HEK293 (cell line): ENCODE measurements at regions of chr12 and their contacts with region 1.

Region 1: GRCh38 chr12:118135788-118136558 is at the start of gene PEBP1:
- H3K4me3 ChIP-seq: peak within 1 kb of the TSS; percentile 79
- H3K27ac ChIP-seq: peak within 1 kb of the TSS; percentile 58; the same call in 1 of the 2 replicates
- H3K4me1 ChIP-seq: peaks cover 10% of the 10 kb centered on the region; the same call in 1 of the 2 replicates
- CTCF ChIP-seq: peak; percentile 72

Region 2: GRCh38 chr12:118103604-118104382 is 32.2 kb before region 1 on chr12 and contains the start of gene VSIG10:
- CTCF ChIA-PET with region 1: no interaction called
- POLR2A ChIA-PET with region 1: interaction called, 11 read pairs
- H3K4me3 ChIP-seq: peak within 1 kb of the TSS; percentile 81
- H3K27ac ChIP-seq: peak within 1 kb of the TSS; percentile 85
- H3K4me1 ChIP-seq: peaks cover 5% of the 10 kb centered on the region
- CTCF ChIP-seq: no peak; the same call in none of the 2 replicates

Region 3: DNA sequence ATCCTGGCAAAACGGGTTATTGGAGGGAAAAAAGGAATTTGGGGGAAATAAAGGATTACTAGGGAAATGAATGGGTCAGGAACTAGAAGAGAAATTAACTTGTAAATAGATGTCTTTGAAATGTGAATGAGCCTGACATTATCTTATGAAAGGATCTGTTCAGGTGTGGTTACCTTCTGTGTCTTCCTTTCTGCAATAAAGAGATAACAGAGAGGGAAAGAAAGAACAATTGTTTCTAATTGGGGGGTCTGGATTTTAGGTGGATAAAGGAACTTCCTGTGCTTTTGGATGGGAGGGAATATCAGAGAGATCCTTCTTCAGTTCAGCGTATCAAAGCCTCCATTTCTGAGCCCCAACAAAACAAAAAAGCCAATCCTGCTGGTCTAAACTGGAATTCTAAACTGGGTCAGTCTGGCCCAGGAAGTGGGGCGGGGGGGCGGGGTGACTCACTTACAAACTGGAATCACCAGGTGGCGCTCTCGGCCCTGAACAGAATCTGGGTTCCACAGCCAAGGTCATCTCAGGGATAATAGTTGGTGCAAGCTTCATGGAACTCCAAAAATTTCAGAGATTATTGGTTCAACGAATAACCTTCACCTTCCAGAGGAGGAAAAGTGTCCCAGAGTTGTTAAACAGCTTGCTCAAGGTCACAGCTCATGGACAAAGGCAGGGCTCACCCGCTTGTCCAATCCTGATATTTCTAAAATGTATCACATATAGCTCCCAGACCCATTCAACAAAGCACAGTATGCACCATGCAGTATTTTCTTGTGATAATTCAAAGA is 15.2 kb before region 1 on chr12:
- CTCF ChIA-PET with region 1: interaction called, 8 read pairs
- POLR2A ChIA-PET with region 1: interaction called, 11 read pairs
- H3K4me3 ChIP-seq: no peak overlapping the region
- H3K27ac ChIP-seq: no peak overlapping the region
- H3K4me1 ChIP-seq: peaks cover 3% of the 10 kb centered on the region; the same call in 1 of the 2 replicates
- CTCF ChIP-seq: no peak